CD8-positive, alpha-beta T cell (primary cell): ENCODE measurements at regions of chr12 and their contacts with region 1.

Region 1: DNA sequence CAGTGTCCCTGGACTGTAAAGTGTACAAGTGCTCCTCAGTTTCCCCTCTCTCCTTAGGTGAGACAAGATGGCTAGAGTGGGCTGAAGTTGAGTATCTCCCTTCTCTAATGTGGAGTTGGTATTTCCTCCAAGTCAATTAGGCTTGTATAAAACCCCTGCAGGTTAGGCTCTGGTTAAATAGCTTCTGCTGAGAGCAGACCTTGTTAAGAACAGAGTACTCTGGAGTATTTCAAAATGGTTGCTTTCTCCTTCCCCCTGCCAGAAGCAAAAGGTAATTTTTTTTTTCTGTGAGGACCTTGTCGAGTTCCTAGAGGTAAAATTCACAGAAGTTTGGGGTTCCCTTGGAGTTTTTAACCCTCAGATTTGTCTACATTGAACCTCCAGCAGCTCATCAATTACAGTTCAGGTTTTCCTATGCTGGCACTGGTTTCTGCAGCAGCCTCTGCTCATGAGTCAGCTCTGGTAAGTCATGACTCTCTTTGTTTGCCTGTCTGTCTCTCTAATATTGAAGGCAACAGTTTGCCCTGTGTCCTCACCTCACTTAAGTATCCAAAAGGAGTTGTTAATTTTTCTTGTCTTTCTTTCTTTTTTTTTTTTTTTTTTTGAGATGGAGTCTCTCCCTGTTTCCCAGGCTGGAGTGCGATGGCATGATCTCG is 27.8 kb upstream of the GLIPR1 start:
- DNase-seq: no peak
- ATAC-seq: no peak
- H3K4me3 ChIP-seq: no peak overlapping the region
- H3K4me3 Mint-ChIP-seq: no peak overlapping the region
- H3K27ac ChIP-seq: no peak overlapping the region
- H3K27ac Mint-ChIP-seq: no peak overlapping the region
- H3K4me1 ChIP-seq: peaks cover 15% of the 10 kb centered on the region
- H3K4me1 Mint-ChIP-seq: peaks cover 20% of the 10 kb centered on the region
- H3K27me3 ChIP-seq: no peaks in the 10 kb centered on the region
- H3K27me3 Mint-ChIP-seq: no peaks in the 10 kb centered on the region
- CTCF ChIP-seq: no peak

Region 2: DNA sequence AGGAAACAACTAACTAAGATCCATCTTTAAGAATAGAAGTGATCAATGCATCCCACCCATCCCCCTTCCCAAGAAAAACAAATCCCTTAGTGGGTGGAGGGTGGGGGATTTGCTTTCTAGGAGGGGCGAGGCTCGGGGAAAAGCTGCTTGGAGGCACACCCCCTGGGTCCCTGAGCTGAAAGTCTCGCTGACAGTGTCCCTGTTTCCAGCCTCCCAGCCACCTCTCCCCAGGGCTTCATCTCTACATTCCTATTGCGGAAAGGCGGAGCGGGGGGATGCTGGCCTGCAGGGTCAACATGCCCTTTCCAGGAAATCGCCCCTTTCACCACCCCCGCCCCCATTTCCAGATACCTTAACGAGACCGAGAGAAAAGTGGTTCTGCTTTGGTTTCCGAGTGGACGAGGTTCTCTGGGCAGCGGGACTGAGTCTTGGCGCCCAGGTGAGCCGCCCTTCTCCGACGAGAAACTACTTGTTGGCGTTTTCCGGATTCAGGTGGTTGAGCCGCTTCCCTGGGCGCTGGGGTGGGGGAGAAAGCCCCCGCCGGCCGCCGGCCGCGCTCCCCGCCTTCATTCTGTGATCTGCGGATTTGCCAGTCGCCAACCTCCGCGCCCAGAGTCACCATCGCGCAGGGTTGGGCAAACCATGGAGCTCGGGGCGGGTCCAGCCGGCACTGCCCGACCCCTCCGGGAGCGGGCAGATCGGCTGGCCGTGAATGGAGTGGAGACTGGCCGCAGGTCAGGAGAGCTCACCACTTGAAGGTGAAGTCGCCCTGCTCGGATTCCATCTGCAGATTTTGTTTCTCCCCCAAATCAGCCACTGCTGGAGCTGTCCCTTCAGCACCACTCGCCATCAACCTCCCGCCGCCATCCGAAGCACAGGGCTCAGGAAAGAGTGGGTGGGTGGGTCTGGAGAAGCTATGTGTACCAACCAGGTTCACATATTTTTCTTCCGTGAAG is 243.7 kb before region 1 on chr12:
- CTCF ChIA-PET with region 1: no interaction called
- POLR2A ChIA-PET with region 1: no interaction called
- intact Hi-C with region 1: no loop called
- DNase-seq: peak in 1 of 9 experiments; percentile 13
- ATAC-seq: no peak
- H3K4me3 ChIP-seq: no peak overlapping the region
- H3K4me3 Mint-ChIP-seq: no peak overlapping the region
- H3K27ac ChIP-seq: no peak overlapping the region
- H3K27ac Mint-ChIP-seq: no peak overlapping the region
- H3K4me1 ChIP-seq: no peaks in the 10 kb centered on the region
- H3K4me1 Mint-ChIP-seq: peaks cover 11% of the 10 kb centered on the region
- H3K27me3 ChIP-seq: peaks cover 16 to 25% of the 10 kb centered on the region in 2 experiments
- H3K27me3 Mint-ChIP-seq: peaks cover 50% of the 10 kb centered on the region
- CTCF ChIP-seq: no peak

Region 3: GRCh38 chr12:75334384-75335030 is 118.3 kb before region 1 on chr12 and contains the start of gene GLIPR1L1:
- CTCF ChIA-PET with region 1: no interaction called
- POLR2A ChIA-PET with region 1: no interaction called
- intact Hi-C with region 1: no loop called
- DNase-seq: peak; percentile 69 to 88 (median 84)
- ATAC-seq: peak; percentile 81
- H3K4me3 ChIP-seq: peak within 1 kb of the TSS; percentile 28 to 34
- H3K4me3 Mint-ChIP-seq: peak within 1 kb of the TSS; percentile 62
- H3K27ac ChIP-seq: no peak within 1 kb of the TSS
- H3K27ac Mint-ChIP-seq: no peak within 1 kb of the TSS
- H3K4me1 ChIP-seq: peaks cover 11% of the 10 kb centered on the region
- H3K4me1 Mint-ChIP-seq: peaks cover 15% of the 10 kb centered on the region
- H3K27me3 ChIP-seq: peaks cover 0 to 4% of the 10 kb centered on the region in 2 experiments
- H3K27me3 Mint-ChIP-seq: peaks cover 24% of the 10 kb centered on the region
- CTCF ChIP-seq: peak; percentile 89
- total RNA-seq, gene GLIPR1L1: not detected

Region 4: DNA sequence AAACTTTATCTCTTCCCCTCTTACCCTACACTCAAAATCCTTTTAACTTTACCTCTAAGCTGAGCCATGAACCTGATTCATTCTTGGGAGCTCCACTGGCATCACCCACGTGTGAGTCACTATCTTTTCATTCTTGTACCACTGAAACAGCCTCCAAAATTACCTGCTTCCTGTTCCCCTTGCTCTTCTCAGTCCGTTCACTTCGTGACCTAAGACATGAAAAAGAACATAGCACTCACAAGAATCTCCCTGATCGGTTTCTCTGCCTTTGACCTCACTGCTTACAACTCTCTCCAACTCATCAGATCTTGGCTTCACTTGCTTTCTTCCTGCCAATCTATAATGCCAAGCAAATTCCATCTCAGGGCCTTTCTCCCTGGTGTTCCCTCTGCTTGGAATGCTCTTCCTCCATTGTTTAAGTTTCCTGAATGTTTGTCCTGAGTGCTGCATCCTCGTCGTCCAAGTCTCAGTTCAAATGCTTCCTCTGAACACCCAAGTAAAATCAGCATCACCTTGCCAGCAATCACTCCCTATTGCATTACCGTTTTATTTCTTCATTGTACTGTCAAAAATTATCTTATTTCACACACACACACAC is 36.9 kb after region 1 on chr12:
- CTCF ChIA-PET with region 1: interaction called, 11 read pairs
- POLR2A ChIA-PET with region 1: no interaction called
- intact Hi-C with region 1: loop called in 1 of 2 experiments (anchors 5 kb)
- DNase-seq: peak in 1 of 9 experiments; percentile 23
- ATAC-seq: peak; percentile 43
- H3K4me3 ChIP-seq: no peak overlapping the region
- H3K4me3 Mint-ChIP-seq: no peak overlapping the region
- H3K27ac ChIP-seq: peak overlapping the region in 1 of 2 experiments; percentile 27
- H3K27ac Mint-ChIP-seq: peak overlapping the region; percentile 68
- H3K4me1 ChIP-seq: no peaks in the 10 kb centered on the region
- H3K4me1 Mint-ChIP-seq: peaks cover 47% of the 10 kb centered on the region
- H3K27me3 ChIP-seq: no peaks in the 10 kb centered on the region
- H3K27me3 Mint-ChIP-seq: no peaks in the 10 kb centered on the region
- CTCF ChIP-seq: no peak